HCT116 (cell line): ENCODE measurements at regions of chr20 and their contacts with region 1.

Region 1: DNA sequence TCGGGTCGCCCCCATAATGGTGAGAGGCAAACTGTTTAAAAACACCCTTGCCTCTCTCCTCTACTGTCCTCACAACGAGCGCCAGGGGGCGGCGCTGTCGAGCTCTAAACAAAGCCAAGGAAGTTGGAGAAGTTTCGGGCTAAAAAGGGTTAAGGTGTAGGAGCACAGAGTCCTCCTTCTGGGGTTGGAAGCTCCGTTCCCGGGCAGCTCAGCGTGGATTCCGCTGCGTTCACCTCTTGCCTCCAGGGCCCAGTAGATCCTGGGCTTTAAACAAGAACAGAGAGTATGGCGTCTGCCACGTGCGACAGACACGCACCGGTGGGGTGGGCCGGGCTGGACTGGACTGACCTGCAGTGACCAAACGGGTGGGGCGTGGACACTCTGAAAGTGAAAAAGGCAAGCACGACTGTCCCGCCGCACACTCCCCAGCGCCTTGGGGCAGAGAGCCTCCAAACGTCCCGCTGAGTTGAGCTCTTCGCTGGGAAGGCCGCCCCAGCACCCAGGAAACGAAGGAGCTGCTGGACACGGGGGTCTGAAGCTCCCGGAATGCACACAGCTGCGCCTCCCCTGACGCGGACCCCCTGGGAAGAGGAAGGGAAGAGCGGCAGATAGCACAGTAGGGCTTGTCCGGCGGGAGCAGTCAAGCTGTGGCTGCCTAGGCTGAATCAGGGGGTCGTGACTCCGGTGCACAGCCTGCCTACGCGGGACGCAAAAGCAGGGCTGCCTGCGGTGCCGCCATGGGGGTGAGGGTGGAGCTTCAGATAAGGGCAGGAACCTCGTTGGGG is 1.6 kb upstream of the THBD start:
- DNase-seq: peak; percentile 42
- ATAC-seq: peak; percentile 69
- H3K4me3 ChIP-seq: peak overlapping the region; percentile 51 to 67
- H3K27ac ChIP-seq: no peak overlapping the region
- H3K4me1 ChIP-seq: peaks cover 3 to 31% of the 10 kb centered on the region in 2 experiments; a peak in 3 of 4 replicates
- H3K27me3 ChIP-seq: peaks cover 12% of the 10 kb centered on the region; the same call in 1 of the 2 replicates
- CTCF ChIP-seq: peak; percentile 54 to 73 (median 70); a peak in 5 of 6 replicates
- POLR2A ChIP-seq: no peak
- RAD21 ChIP-seq: peak; percentile 73

Region 2: DNA sequence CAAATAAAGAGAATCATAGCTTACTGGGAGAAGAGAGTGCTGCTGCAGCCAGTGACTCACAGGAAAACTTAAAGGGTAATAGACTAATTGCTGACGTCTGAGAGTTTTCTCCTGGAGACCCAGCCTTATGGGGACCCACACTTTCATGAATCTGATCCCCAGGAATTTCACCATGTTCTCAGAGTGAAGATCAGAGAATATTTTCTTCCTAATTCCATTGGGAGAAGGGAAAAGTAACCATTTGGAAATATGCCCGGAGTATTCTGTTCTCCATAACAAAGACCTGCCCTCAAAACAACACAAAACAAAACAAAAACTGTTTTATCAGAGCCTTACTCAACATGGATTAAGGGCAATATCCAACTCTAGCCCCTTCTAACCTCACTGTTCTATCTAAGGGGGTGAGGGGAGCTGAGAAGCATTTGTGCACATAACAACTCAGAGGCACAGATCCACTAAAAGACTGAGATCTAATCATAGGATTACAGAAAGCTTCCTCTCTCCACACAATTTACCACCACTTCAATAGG is 184.2 kb before region 1 on chr20:
- CTCF ChIA-PET with region 1: no interaction called
- POLR2A ChIA-PET with region 1: no interaction called
- RAD21 ChIA-PET with region 1: no interaction called
- intact Hi-C with region 1: no loop called
- DNase-seq: no peak
- ATAC-seq: no peak
- H3K4me3 ChIP-seq: no peak overlapping the region
- H3K27ac ChIP-seq: no peak overlapping the region
- H3K4me1 ChIP-seq: no peaks in the 10 kb centered on the region
- H3K27me3 ChIP-seq: peaks cover 32% of the 10 kb centered on the region
- CTCF ChIP-seq: no peak
- POLR2A ChIP-seq: no peak
- RAD21 ChIP-seq: no peak

Region 3: GRCh38 chr20:23009636-23010035 is 41.4 kb before region 1 on chr20:
- CTCF ChIA-PET with region 1: no interaction called
- POLR2A ChIA-PET with region 1: no interaction called
- RAD21 ChIA-PET with region 1: no interaction called
- intact Hi-C with region 1: no loop called
- DNase-seq: no peak
- ATAC-seq: no peak
- H3K4me3 ChIP-seq: no peak overlapping the region
- H3K27ac ChIP-seq: no peak overlapping the region
- H3K4me1 ChIP-seq: peaks cover 5 to 7% of the 10 kb centered on the region in 2 experiments
- H3K27me3 ChIP-seq: 0 out of 2 replicates have a peak, but pooled peaks cover 3% of the 10 kb centered on the region
- CTCF ChIP-seq: no peak
- POLR2A ChIP-seq: no peak
- RAD21 ChIP-seq: no peak

Region 4: GRCh38 chr20:23061734-23062561 is 10.9 kb after region 1 on chr20:
- CTCF ChIA-PET with region 1: interaction called, 17 read pairs
- POLR2A ChIA-PET with region 1: interaction called, 3 read pairs
- RAD21 ChIA-PET with region 1: no interaction called
- intact Hi-C with region 1: no loop called
- DNase-seq: no peak
- ATAC-seq: peak; percentile 81
- H3K4me3 ChIP-seq: no peak overlapping the region
- H3K27ac ChIP-seq: no peak overlapping the region
- H3K4me1 ChIP-seq: no peaks in the 10 kb centered on the region; a peak in 1 of 4 replicates
- H3K27me3 ChIP-seq: no peaks in the 10 kb centered on the region
- CTCF ChIP-seq: peak; percentile 11 to 55 (median 54); a peak in 5 of 6 replicates
- POLR2A ChIP-seq: no peak
- RAD21 ChIP-seq: peak; percentile 41; the same call in 1 of the 2 replicates

Region 5: DNA sequence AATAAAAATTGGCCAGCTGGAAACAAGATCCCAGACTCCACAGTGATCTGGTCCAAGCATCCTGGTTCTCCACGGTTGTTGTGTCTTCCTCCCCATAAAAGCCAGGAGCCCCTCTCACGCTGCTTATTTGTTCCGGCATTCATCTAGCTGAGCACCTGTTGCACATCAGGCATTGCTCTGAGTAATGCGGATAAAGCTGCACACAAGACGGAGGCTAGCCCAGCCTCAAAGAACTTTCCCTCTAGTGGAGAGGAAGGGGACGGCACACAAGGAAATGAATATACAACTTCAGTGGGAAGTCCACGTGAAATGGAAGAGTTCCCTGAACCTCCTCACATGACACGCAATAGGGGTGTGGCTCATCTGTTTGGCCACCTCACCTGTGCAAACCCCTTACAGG is 269.3 kb after region 1 on chr20:
- CTCF ChIA-PET with region 1: no interaction called
- POLR2A ChIA-PET with region 1: no interaction called
- RAD21 ChIA-PET with region 1: no interaction called
- intact Hi-C with region 1: loop called (anchors 10 kb)
- DNase-seq: peak; percentile 26
- ATAC-seq: peak; percentile 94
- H3K4me3 ChIP-seq: no peak overlapping the region
- H3K27ac ChIP-seq: no peak overlapping the region
- H3K4me1 ChIP-seq: no peaks in the 10 kb centered on the region; a peak in 1 of 4 replicates
- H3K27me3 ChIP-seq: peaks cover 64% of the 10 kb centered on the region
- CTCF ChIP-seq: peak in 2 of 3 experiments; percentile 65 to 66; a peak in 4 of 6 replicates
- POLR2A ChIP-seq: no peak
- RAD21 ChIP-seq: peak; percentile 36; the same call in 1 of the 2 replicates